ENCODE measurements at regions of chr1 and their contacts with region 1.

Region 1: DNA sequence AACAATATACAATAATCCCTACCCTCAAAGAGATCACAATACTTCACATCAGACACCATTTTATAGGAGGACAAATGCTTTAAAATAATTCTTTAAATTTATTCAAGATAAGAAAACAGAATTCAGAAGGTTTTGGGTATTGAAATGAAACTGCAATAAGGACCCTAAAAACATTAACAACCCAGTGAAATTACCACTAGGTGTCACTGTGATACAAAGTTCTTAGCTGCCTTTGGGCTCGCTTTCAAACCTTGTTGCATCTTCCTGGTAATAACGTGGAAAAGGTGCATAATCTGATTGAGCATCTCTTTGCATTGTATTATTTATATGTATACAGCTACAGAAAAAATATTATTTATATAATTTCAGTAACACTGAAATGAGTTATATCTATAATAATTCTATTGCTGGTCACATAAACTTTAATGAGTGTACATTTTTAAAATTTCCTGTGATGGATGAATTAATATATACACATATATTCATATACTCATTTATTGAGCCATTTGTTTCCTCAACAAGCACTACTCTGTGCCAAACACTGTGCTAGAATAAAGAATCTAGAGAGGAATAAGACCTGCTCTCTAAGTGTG is 185.2 kb downstream of the FAF1 start:
- DNase-seq: peak; percentile 4 to 57
- ATAC-seq: peak in 1 of 2 experiments; percentile 73; a peak in 3 of 6 replicates
- H3K4me3 ChIP-seq: no peak overlapping the region
- H3K27ac ChIP-seq: no peak overlapping the region
- H3K4me1 ChIP-seq: peaks cover 5% of the 10 kb centered on the region; the same call in 1 of the 3 replicates
- CTCF ChIP-seq: peak; percentile 77
- EP300 ChIP-seq: no peak
- POLR2A ChIP-seq: no peak
- RAD21 ChIP-seq: peak; percentile 67 to 74

Region 2: GRCh38 chr1:50793521-50793920 is 18.7 kb after region 1 on chr1:
- CTCF ChIA-PET with region 1: interaction called, 12 read pairs
- POLR2A ChIA-PET with region 1: no interaction called
- DNase-seq: no peak
- ATAC-seq: no peak
- H3K4me3 ChIP-seq: no peak overlapping the region
- H3K27ac ChIP-seq: no peak overlapping the region
- H3K4me1 ChIP-seq: no peaks in the 10 kb centered on the region
- CTCF ChIP-seq: no peak
- EP300 ChIP-seq: no peak
- POLR2A ChIP-seq: no peak
- RAD21 ChIP-seq: no peak

Region 3: GRCh38 chr1:50929376-50929958 is 154.6 kb after region 1 on chr1:
- CTCF ChIA-PET with region 1: interaction called, 11 read pairs
- POLR2A ChIA-PET with region 1: no interaction called
- DNase-seq: peak; percentile 5 to 39
- ATAC-seq: no peak
- H3K4me3 ChIP-seq: no peak overlapping the region
- H3K27ac ChIP-seq: no peak overlapping the region
- H3K4me1 ChIP-seq: no peaks in the 10 kb centered on the region
- CTCF ChIP-seq: peak; percentile 61
- EP300 ChIP-seq: no peak
- POLR2A ChIP-seq: no peak
- RAD21 ChIP-seq: peak; percentile 36 to 49; a peak in 4 of 5 replicates